Panc1 (cell line): ENCODE measurements at regions of chr15 and their contacts with region 1.

Region 1: GRCh38 chr15:89760303-89761008 is 9.4 kb upstream of the MESP1 start:
- DNase-seq: peak; percentile 54
- ATAC-seq: peak; percentile 94
- H3K4me3 ChIP-seq: no peak overlapping the region
- H3K27ac ChIP-seq: no peak overlapping the region
- H3K4me1 ChIP-seq: peaks cover 10% of the 10 kb centered on the region; the same call in 1 of the 2 replicates
- H3K27me3 ChIP-seq: no peaks in the 10 kb centered on the region
- CTCF ChIP-seq: peak; percentile 99

Region 2: GRCh38 chr15:89613031-89613430 is 147.4 kb before region 1 on chr15:
- CTCF ChIA-PET with region 1: interaction called, 11 read pairs
- POLR2A ChIA-PET with region 1: no interaction called
- in situ Hi-C with region 1: no loop called
- intact Hi-C with region 1: no loop called
- DNase-seq: no peak
- ATAC-seq: no peak
- H3K4me3 ChIP-seq: no peak overlapping the region
- H3K27ac ChIP-seq: no peak overlapping the region
- H3K4me1 ChIP-seq: no peaks in the 10 kb centered on the region
- H3K27me3 ChIP-seq: no peaks in the 10 kb centered on the region
- CTCF ChIP-seq: no peak

Region 3: GRCh38 chr15:89627256-89627970 is 133.0 kb before region 1 on chr15:
- CTCF ChIA-PET with region 1: no interaction called
- POLR2A ChIA-PET with region 1: no interaction called
- in situ Hi-C with region 1: no loop called
- intact Hi-C with region 1: no loop called
- DNase-seq: no peak
- ATAC-seq: no peak
- H3K4me3 ChIP-seq: no peak overlapping the region
- H3K27ac ChIP-seq: no peak overlapping the region
- H3K4me1 ChIP-seq: no peaks in the 10 kb centered on the region
- H3K27me3 ChIP-seq: no peaks in the 10 kb centered on the region
- CTCF ChIP-seq: no peak

Region 4: DNA sequence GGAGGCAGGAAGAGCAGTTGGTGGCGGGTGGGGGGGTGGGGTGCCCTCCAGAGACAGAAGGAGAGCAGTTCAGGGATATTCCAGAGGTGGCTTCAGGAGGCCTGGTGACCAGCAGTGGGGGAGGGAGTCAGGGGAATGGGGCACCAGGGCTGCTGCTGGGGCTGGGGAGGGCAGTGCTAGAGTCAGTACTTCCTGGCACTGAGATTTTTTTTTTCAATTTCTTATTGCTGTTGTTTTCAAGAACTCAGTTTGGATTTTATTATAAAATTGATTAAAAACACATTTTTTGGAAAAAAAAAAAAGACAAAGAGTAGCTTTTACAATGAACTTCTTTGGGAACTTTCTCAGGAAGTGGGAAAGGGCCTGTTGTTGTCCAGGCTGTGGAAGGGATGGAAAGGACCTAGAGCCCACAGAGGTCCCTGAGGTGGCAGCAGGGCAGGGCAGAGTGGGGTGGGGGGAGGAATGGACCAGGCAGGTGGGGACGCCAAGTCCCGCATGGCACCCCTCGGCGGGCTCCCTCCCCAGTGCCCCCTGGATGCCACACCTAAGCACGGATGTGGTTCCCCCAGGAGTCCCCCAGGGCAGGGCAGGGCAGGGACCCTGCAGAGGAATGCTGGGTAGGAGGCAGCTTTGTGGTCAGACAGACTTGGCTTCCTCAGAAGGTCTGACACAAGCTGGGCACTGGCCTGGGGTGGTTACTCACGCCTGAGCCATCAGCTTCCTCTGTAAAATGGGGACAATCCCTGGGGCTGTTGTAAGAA is 62.7 kb after region 1 on chr15:
- CTCF ChIA-PET with region 1: interaction called, 10 read pairs
- POLR2A ChIA-PET with region 1: no interaction called
- in situ Hi-C with region 1: no loop called
- intact Hi-C with region 1: no loop called
- DNase-seq: no peak
- ATAC-seq: peak; percentile 44
- H3K4me3 ChIP-seq: no peak overlapping the region
- H3K27ac ChIP-seq: peak overlapping the region; percentile 74
- H3K4me1 ChIP-seq: peaks cover 59% of the 10 kb centered on the region
- H3K27me3 ChIP-seq: no peaks in the 10 kb centered on the region
- CTCF ChIP-seq: no peak

Region 5: DNA sequence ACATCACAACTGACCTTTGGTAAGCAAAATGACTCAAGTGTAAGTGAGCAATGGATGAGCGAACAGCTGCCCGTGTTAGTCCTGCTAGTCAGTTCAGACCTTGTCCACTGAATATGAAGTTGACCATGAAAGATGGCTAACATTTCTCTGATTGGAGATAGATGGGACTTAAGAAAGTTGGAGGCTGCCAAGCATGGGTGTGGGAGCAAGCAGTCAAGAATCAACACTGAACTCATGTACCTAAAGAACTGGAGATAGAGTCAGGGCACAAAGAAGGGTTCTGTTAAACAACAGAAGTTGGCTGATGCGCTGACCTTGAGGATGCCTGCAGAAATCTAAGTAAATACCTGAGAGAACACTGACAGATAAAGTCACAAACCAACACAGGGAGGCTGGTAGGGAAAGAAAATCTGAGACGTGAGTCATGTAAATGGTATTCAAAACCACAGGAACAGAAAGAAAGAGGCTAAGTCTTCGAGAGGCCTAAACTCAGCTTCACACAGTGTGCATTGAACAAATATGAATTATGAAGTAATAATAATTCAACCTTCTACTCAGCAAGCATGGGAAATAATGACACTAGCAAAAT is 84.9 kb after region 1 on chr15:
- CTCF ChIA-PET with region 1: no interaction called
- POLR2A ChIA-PET with region 1: no interaction called
- in situ Hi-C with region 1: no loop called
- intact Hi-C with region 1: no loop called
- DNase-seq: peak; percentile 90
- ATAC-seq: peak; percentile 96
- H3K4me3 ChIP-seq: no peak overlapping the region
- H3K27ac ChIP-seq: peak overlapping the region; percentile 68
- H3K4me1 ChIP-seq: peaks cover 23% of the 10 kb centered on the region
- H3K27me3 ChIP-seq: no peaks in the 10 kb centered on the region
- CTCF ChIP-seq: no peak

Region 6: GRCh38 chr15:89874926-89875564 is 114.6 kb after region 1 on chr15:
- CTCF ChIA-PET with region 1: interaction called, 40 read pairs
- POLR2A ChIA-PET with region 1: no interaction called
- in situ Hi-C with region 1: loop called (anchors 10 kb)
- intact Hi-C with region 1: loop called (anchors 2 kb)
- DNase-seq: peak; percentile 58
- ATAC-seq: peak; percentile 100
- H3K4me3 ChIP-seq: no peak overlapping the region
- H3K27ac ChIP-seq: no peak overlapping the region
- H3K4me1 ChIP-seq: no peaks in the 10 kb centered on the region
- H3K27me3 ChIP-seq: no peaks in the 10 kb centered on the region
- CTCF ChIP-seq: peak; percentile 98

Region 7: GRCh38 chr15:89888214-89888804 is 127.9 kb after region 1 on chr15:
- CTCF ChIA-PET with region 1: interaction called, 16 read pairs
- POLR2A ChIA-PET with region 1: interaction called, 8 read pairs
- in situ Hi-C with region 1: no loop called
- intact Hi-C with region 1: no loop called
- DNase-seq: no peak
- ATAC-seq: peak; percentile 79
- H3K4me3 ChIP-seq: no peak overlapping the region
- H3K27ac ChIP-seq: no peak overlapping the region
- H3K4me1 ChIP-seq: no peaks in the 10 kb centered on the region
- H3K27me3 ChIP-seq: no peaks in the 10 kb centered on the region
- CTCF ChIP-seq: peak; percentile 79

Region 8: GRCh38 chr15:90001683-90002427 is 241.4 kb after region 1 on chr15:
- CTCF ChIA-PET with region 1: no interaction called
- POLR2A ChIA-PET with region 1: no interaction called
- in situ Hi-C with region 1: no loop called
- intact Hi-C with region 1: no loop called
- DNase-seq: no peak
- ATAC-seq: peak; percentile 56
- H3K4me3 ChIP-seq: peak overlapping the region; percentile 64 to 81
- H3K27ac ChIP-seq: no peak overlapping the region
- H3K4me1 ChIP-seq: peaks cover 61% of the 10 kb centered on the region
- H3K27me3 ChIP-seq: no peaks in the 10 kb centered on the region
- CTCF ChIP-seq: no peak